GM23248 (cell line): ENCODE measurements at regions of chr1 and their contacts with region 1.

Region 1: DNA sequence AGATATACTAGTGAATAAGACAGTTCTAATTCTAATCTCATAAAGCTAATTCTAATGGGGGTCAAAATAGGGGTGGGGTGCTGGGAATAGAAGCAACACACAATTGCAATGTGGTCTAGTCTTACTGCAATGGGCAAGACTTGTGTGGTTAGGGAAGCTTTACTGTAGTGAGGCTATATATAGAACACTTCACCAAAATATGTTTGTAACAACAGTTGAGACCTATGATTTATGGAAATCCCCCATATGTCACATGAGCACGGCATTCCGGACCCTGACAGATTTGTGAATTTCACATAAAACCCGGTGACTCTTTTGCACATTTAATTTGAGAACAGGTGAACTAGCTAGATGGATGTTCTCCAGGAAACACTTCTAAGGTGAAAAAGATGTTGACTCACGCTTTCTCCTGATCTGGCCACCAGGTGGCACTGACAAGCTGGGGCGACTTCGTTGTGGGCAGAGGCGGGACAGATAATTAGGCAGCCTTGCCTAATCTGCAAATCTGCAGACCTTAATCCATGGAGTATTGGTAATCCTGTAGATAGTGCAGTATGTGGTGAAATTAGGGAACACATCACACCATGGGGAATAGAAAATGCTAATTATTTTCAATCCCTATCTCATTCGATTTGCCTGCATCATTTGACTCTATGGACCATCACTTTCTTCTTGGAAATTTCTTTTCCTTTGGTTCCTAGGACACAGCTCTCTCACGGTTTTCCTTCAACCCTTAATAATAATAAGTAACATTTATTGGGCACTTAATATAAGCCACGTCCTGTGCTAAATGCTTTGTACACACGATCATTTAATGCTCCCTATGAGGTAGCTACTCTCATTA is 37.7 kb downstream of the KIAA0040 start:
- DNase-seq: peak; percentile 64
- H3K4me3 ChIP-seq: no peak overlapping the region
- H3K27ac ChIP-seq: no peak overlapping the region
- H3K4me1 ChIP-seq: peaks cover 7% of the 10 kb centered on the region
- H3K27me3 ChIP-seq: no peaks in the 10 kb centered on the region; the same call in 1 of the 2 replicates

Region 2: GRCh38 chr1:174999216-174999925 is 155.5 kb before region 1 on chr1:
- in situ Hi-C with region 1: no loop called
- DNase-seq: peak; percentile 100
- H3K4me3 ChIP-seq: peak overlapping the region; percentile 84
- H3K27ac ChIP-seq: peak overlapping the region; percentile 98
- H3K4me1 ChIP-seq: peaks cover 47% of the 10 kb centered on the region
- H3K27me3 ChIP-seq: no peaks in the 10 kb centered on the region

Region 3: GRCh38 chr1:175287377-175287776 is 132.5 kb after region 1 on chr1:
- in situ Hi-C with region 1: no loop called
- DNase-seq: no peak
- H3K4me3 ChIP-seq: no peak overlapping the region
- H3K27ac ChIP-seq: no peak overlapping the region
- H3K4me1 ChIP-seq: no peaks in the 10 kb centered on the region
- H3K27me3 ChIP-seq: no peaks in the 10 kb centered on the region

Region 4: DNA sequence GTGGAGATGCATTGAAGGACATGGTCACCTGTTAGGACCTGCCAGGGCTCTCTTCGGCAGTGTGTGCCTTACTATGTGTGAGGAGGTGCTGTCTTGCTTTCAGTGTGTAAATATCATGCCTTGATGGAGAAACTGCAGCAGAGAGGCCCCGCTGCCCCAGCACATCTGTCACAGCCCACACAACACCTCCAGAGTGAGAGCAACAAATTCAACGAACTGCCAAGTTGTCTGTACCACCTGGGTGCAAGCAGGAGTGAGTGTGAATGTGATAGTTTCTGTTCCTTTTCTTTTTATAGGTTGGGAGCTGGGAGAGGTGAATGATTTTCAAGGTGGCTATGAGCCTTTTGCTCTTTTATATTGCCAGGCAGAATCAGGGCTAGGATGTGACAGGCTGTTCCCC is 152.3 kb after region 1 on chr1:
- in situ Hi-C with region 1: loop called (anchors 5 kb)
- DNase-seq: no peak
- H3K4me3 ChIP-seq: no peak overlapping the region
- H3K27ac ChIP-seq: no peak overlapping the region
- H3K4me1 ChIP-seq: no peaks in the 10 kb centered on the region
- H3K27me3 ChIP-seq: 0 out of 2 replicates have a peak, but pooled peaks cover 8% of the 10 kb centered on the region

Region 5: DNA sequence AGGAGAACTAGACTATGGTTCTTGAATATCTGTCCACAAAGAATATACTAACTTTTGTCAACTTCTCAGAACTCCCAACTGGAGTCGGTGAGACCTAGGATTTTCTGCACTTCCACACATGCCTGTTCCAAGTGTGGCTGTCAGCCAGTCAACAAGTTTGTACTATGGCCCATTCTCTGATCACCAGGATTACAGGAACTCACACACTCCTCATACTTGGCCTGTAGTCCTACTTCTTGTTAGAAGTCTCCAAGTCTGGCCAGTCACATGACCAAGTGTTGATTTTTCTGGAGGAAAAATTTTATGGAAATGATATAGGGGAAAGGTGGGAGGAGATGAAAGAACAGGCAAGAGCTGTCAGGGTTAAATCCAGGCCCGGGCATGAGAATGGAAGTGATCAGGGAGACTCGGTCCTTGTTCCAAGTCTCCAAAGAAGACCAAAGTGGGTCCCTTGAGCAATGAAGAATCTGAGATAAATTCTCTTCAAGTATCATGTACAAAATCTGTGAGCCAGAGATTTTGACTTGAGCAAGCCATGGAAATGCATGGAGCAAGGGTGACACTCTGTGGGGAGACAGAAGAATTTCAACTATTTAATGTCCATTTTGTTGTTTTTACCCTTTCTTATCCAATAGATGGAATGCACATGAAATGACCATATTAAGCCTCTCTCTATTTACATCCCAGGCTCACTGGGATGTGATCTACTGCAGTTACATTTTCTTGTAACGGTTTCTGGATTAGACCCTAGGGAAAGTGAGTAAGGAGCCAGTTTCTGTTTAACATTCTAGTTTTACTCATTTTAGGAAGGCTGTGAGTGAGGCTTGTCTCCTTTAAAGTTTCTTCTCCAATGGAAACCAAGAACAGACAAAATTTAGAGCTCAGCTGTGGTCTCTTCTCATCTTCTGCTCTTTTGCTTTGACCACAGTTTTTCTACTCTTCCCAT is 1688.8 kb after region 1 on chr1:
- in situ Hi-C with region 1: loop called (anchors 25 kb)
- DNase-seq: peak; percentile 78
- H3K4me3 ChIP-seq: no peak overlapping the region
- H3K27ac ChIP-seq: no peak overlapping the region
- H3K4me1 ChIP-seq: no peaks in the 10 kb centered on the region
- H3K27me3 ChIP-seq: no peaks in the 10 kb centered on the region